ENCODE measurements at regions of chr7 and their contacts with region 1.

Region 1: DNA sequence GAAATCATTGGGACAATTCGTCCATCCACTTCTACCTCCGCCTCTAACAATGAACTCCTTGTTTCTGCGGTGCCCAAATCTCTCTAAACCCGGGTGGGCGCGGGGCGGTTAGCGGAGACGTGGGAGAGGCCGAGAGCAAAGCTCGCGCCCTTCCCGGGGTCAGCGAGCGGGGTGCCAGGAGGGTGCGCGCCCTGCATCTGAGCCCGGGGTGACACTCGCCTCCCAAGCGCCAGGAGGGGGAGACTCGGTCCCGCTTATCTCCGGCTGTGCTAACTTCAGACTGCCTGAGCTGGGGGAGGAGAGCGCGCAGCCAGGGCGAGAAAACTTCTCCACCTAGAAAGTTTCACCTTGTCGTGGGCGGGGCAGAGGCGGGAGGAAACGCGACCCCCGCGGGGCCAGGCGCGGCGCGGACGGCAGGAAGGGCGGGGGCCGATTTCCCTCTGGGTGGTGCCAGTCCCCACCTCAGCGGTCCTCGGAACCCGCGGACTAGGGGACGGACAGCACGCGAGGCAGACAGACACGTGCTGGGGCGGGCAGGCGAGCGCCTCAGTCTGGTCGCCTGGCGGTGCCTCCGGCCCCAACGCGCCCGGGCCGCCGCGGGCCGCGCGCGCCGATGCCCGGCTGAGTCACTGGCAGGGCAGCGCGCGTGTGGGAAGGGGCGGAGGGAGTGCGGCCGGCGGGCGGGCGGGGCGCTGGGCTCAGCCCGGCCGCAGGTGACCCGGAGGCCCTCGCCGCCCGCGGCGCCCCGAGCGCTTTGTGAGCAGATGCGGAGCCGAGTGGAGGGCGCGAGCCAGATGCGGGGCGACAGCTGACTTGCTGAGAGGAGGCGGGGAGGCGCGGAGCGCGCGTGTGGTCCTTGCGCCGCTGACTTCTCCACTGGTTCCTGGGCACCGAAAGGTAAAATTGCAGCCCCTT is at the start of gene MET:
- DNase-seq: peak; percentile 40 to 74 (median 64)
- H3K4me3 ChIP-seq: peak within 1 kb of the TSS; percentile 14 to 71 (median 16)
- H3K4me3 Mint-ChIP-seq: peak within 1 kb of the TSS; percentile 70 to 91
- H3K27ac ChIP-seq: no peak within 1 kb of the TSS
- H3K27ac Mint-ChIP-seq: peak within 1 kb of the TSS in 4 of 7 donors; percentile 24 to 82 (median 46)
- H3K4me1 ChIP-seq: peaks cover 11 to 15% of the 10 kb centered on the region in 2 donors
- H3K4me1 Mint-ChIP-seq: peaks cover 13% of the 10 kb centered on the region
- H3K27me3 ChIP-seq: peaks cover 36 to 47% of the 10 kb centered on the region in 2 donors
- H3K27me3 Mint-ChIP-seq: peaks cover 29 to 50% (median 41%) of the 10 kb centered on the region in 3 donors
- CTCF ChIP-seq: peak; percentile 50
- polyA plus RNA-seq, gene MET: not detected

Region 2: GRCh38 chr7:116601426-116601825 is 70.5 kb before region 1 on chr7:
- intact Hi-C with region 1: loop called in 1 of 2 experiments (anchors 5 kb)
- DNase-seq: no peak
- H3K4me3 ChIP-seq: no peak overlapping the region
- H3K4me3 Mint-ChIP-seq: no peak overlapping the region
- H3K27ac ChIP-seq: no peak overlapping the region
- H3K27ac Mint-ChIP-seq: no peak overlapping the region
- H3K4me1 ChIP-seq: peaks cover 6 to 15% of the 10 kb centered on the region in 2 donors
- H3K4me1 Mint-ChIP-seq: peaks cover 12% of the 10 kb centered on the region
- H3K27me3 ChIP-seq: peaks cover 20 to 25% of the 10 kb centered on the region in 2 donors
- H3K27me3 Mint-ChIP-seq: peaks cover 14 to 27% (median 21%) of the 10 kb centered on the region in 3 donors
- CTCF ChIP-seq: no peak

Region 3: GRCh38 chr7:116653204-116653603 is 18.7 kb before region 1 on chr7:
- intact Hi-C with region 1: no loop called
- DNase-seq: peak in 1 of 3 donors; percentile 25
- H3K4me3 ChIP-seq: no peak overlapping the region
- H3K4me3 Mint-ChIP-seq: no peak overlapping the region
- H3K27ac ChIP-seq: no peak overlapping the region
- H3K27ac Mint-ChIP-seq: no peak overlapping the region
- H3K4me1 ChIP-seq: no peaks in the 10 kb centered on the region
- H3K4me1 Mint-ChIP-seq: no peaks in the 10 kb centered on the region
- H3K27me3 ChIP-seq: no peaks in the 10 kb centered on the region
- H3K27me3 Mint-ChIP-seq: peaks cover 0 to 2% (median 0%) of the 10 kb centered on the region in 3 donors
- CTCF ChIP-seq: no peak

Region 4: GRCh38 chr7:116802746-116803152 is 130.8 kb after region 1 on chr7:
- intact Hi-C with region 1: loop called (anchors 5 to 10 kb)
- DNase-seq: peak; percentile 60 to 86 (median 71)
- H3K4me3 ChIP-seq: no peak overlapping the region
- H3K4me3 Mint-ChIP-seq: peak overlapping the region in 1 of 2 donors; percentile 9
- H3K27ac ChIP-seq: no peak overlapping the region
- H3K27ac Mint-ChIP-seq: peak overlapping the region in 2 of 7 donors; percentile 1 to 72
- H3K4me1 ChIP-seq: no peaks in the 10 kb centered on the region
- H3K4me1 Mint-ChIP-seq: peaks cover 9% of the 10 kb centered on the region
- H3K27me3 ChIP-seq: no peaks in the 10 kb centered on the region
- H3K27me3 Mint-ChIP-seq: peaks cover 0 to 5% (median 1%) of the 10 kb centered on the region in 3 donors
- CTCF ChIP-seq: peak; percentile 56